Naive thymus-derived CD4-positive, alpha-beta T cell (primary cell): ENCODE measurements at regions of chr13 and their contacts with region 1.

Region 1: DNA sequence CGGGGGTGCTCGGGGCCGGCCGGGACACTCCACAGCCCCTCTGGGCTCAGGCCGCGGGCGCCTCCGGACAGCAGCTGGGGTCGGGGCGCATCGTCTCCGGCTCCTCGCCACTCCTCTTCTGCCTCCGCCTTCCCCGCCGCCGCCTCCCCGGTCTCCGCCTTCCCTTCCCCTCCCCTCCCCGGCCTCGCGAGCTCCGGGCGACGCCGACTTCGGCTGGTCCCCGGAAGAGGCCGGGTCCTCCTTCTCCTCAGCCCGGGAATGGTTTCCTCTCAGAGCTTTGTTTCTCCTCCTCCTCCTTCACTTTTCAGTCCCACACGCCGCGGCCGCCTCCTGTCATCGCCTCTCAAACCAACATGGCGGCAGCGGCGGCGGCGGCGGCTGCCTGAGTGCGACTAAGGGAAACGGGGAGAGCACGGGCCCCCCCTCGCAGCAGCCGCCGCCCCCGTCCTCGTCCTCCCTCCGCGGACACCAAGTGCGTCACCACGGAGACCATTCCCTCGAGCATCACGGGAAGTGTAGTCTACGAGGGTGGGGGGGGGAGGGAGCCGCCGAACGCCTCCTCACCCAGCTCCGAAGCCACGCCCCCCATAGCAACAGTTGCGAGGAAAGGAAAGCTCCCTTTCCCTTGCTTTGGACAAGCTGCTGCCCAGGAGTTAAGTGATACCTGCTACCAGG is at the start of gene UBL3:
- DNase-seq: peak; percentile 88 to 95 (median 92)
- ATAC-seq: peak; percentile 97
- H3K4me3 ChIP-seq: peak within 1 kb of the TSS; percentile 78
- H3K4me3 Mint-ChIP-seq: peak within 1 kb of the TSS; percentile 91 to 99 (median 96)
- H3K27ac ChIP-seq: peak within 1 kb of the TSS; percentile 98
- H3K27ac Mint-ChIP-seq: peak within 1 kb of the TSS; percentile 91 to 100 (median 99)
- H3K4me1 ChIP-seq: peaks cover 5 to 13% of the 10 kb centered on the region in 2 donors
- H3K4me1 Mint-ChIP-seq: peaks cover 10 to 42% (median 24%) of the 10 kb centered on the region in 7 donors
- H3K27me3 ChIP-seq: no peaks in the 10 kb centered on the region
- H3K27me3 Mint-ChIP-seq: no peaks in the 10 kb centered on the region
- total RNA-seq, gene UBL3: 12.7 to 34.5 (median 28.9) TPM

Region 2: DNA sequence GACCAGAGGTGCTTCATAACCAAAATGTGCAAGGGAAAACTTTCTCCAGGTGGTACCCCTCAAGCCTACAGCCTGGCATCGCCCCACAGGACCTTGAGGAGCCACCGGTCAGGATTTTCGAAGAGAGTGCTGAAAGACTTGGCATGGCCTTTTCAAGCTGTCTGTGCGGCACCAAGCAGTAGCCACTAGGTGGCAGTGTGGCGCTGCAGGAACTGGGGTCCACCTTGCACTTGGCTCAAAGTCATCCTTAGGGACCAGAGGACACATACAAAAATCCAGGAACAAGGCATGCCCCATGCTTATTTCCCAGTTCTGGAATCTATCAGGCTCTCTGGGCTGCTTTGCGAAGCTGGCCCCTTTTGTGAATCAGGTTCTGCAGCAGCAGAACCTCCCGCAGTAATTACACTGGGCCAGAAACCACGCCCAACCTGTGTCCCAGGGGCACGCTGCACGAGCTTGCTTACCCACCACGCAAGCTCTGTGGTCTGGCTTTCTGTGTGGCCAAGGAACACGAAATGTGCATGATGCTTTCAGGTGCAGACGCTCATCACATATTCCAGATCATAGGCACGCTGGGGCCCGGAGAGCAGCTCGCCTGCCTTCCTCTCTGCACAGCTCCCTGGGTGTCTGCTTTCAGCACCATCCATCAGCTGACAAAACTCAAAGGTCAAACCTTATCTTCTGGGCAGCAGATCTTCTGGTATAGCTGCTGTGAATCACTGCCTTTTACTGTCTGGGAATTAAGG is 342.1 kb before region 1 on chr13:
- CTCF ChIA-PET with region 1: no interaction called
- POLR2A ChIA-PET with region 1: no interaction called
- intact Hi-C with region 1: loop called in 1 of 2 experiments (anchors 5 kb)
- DNase-seq: peak; percentile 32 to 74 (median 61)
- ATAC-seq: peak; percentile 76
- H3K4me3 ChIP-seq: no peak overlapping the region
- H3K4me3 Mint-ChIP-seq: no peak overlapping the region
- H3K27ac ChIP-seq: no peak overlapping the region
- H3K27ac Mint-ChIP-seq: peak overlapping the region in 1 of 9 donors; percentile 21
- H3K4me1 ChIP-seq: no peaks in the 10 kb centered on the region
- H3K4me1 Mint-ChIP-seq: peaks cover 0 to 2% (median under 1%) of the 10 kb centered on the region in 7 donors
- H3K27me3 ChIP-seq: no peaks in the 10 kb centered on the region
- H3K27me3 Mint-ChIP-seq: peaks cover 3 to 6% (median 5%) of the 10 kb centered on the region in 5 donors

Region 3: DNA sequence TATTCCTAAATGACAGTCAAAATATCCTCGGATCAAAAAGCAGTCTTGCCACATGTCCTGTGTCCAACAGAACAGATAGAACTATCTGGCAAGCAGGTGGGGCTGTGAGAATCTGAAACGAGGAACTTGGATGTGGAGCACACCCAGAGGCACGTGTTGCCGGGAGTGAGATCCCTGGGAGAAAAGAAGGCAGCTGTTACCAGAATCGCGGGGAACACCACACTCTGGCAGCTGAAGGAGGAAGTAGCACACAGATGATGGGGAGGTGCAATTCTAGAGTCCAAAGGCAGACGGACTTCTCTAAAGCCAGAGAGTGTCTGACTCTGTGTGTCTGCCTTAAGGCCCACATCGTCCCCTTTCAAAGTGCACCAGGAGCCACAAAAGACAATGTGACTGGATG is 277.2 kb before region 1 on chr13:
- CTCF ChIA-PET with region 1: no interaction called
- POLR2A ChIA-PET with region 1: no interaction called
- intact Hi-C with region 1: no loop called
- DNase-seq: no peak
- ATAC-seq: peak; percentile 63
- H3K4me3 ChIP-seq: no peak overlapping the region
- H3K4me3 Mint-ChIP-seq: peak overlapping the region in 2 of 10 donors; percentile 20 to 43
- H3K27ac ChIP-seq: no peak overlapping the region
- H3K27ac Mint-ChIP-seq: peak overlapping the region in 3 of 9 donors; percentile 14 to 85 (median 59)
- H3K4me1 ChIP-seq: no peaks in the 10 kb centered on the region
- H3K4me1 Mint-ChIP-seq: peaks cover 16 to 65% (median 52%) of the 10 kb centered on the region in 7 donors
- H3K27me3 ChIP-seq: no peaks in the 10 kb centered on the region
- H3K27me3 Mint-ChIP-seq: no peaks in the 10 kb centered on the region

Region 4: DNA sequence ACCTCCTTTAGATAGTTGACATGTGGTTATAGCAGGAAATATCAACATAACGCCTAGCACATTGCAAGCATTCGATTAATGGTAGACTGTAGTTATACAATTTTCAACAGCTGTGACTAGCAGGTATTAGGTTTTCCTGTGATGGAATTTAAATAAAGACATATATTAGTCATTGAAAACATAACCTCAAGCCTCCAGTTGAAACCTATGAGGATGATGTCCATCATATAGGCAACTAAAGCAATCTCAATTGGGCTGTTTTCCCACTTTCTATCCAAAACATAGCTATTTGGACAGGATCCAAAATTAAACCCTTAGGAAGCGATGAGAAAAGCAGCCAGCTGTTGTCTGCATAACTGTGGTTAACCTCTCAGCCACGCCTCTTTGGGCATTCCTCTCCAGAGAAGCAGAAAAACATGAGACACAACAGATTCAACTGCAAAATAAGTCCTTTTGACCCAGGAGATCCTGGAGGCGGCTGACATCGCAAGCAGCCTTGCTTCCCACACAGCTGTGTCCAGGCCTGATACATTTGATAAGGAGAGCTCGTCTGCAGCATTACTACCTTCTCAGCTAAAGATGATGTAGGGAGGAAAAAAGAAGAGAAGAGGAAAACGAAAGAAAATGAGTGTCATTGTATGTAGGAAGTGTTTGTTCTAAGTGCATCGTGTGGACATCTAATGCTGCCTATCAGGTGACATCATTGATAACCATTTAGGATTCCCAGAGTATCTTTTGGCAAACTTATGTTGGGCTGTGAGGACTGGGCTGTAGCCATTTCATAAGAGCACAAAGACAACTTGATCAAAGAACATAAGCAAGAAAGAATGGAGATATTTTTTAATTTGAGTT is 52.0 kb after region 1 on chr13:
- CTCF ChIA-PET with region 1: no interaction called
- POLR2A ChIA-PET with region 1: interaction called, 5 read pairs
- intact Hi-C with region 1: loop called in 1 of 2 experiments (anchors 2 kb)
- DNase-seq: peak in 8 of 9 donors; percentile 2 to 40 (median 24)
- ATAC-seq: peak; percentile 84
- H3K4me3 ChIP-seq: peak overlapping the region; percentile 46
- H3K4me3 Mint-ChIP-seq: peak overlapping the region; percentile 69 to 95 (median 82)
- H3K27ac ChIP-seq: no peak overlapping the region
- H3K27ac Mint-ChIP-seq: peak overlapping the region; percentile 1 to 94 (median 74)
- H3K4me1 ChIP-seq: peaks cover 13 to 22% of the 10 kb centered on the region in 2 donors
- H3K4me1 Mint-ChIP-seq: peaks cover 8 to 25% (median 22%) of the 10 kb centered on the region in 7 donors
- H3K27me3 ChIP-seq: no peaks in the 10 kb centered on the region
- H3K27me3 Mint-ChIP-seq: peaks cover 0 to 29% (median 0%) of the 10 kb centered on the region in 5 donors

Region 5: GRCh38 chr13:29954082-29955028 is 104.0 kb after region 1 on chr13:
- CTCF ChIA-PET with region 1: interaction called, 3 read pairs
- POLR2A ChIA-PET with region 1: interaction called, 14 read pairs
- intact Hi-C with region 1: loop called (anchors 1 kb)
- DNase-seq: peak in 8 of 9 donors; percentile 33 to 77 (median 70)
- ATAC-seq: peak; percentile 79
- H3K4me3 ChIP-seq: peak overlapping the region; percentile 43
- H3K4me3 Mint-ChIP-seq: peak overlapping the region; percentile 72 to 90 (median 84)
- H3K27ac ChIP-seq: peak overlapping the region; percentile 69
- H3K27ac Mint-ChIP-seq: peak overlapping the region; percentile 79 to 94 (median 89)
- H3K4me1 ChIP-seq: peaks cover 20 to 30% of the 10 kb centered on the region in 2 donors
- H3K4me1 Mint-ChIP-seq: peaks cover 22 to 81% (median 53%) of the 10 kb centered on the region in 7 donors
- H3K27me3 ChIP-seq: no peaks in the 10 kb centered on the region
- H3K27me3 Mint-ChIP-seq: peaks cover 0 to 15% (median 0%) of the 10 kb centered on the region in 5 donors

Region 6: DNA sequence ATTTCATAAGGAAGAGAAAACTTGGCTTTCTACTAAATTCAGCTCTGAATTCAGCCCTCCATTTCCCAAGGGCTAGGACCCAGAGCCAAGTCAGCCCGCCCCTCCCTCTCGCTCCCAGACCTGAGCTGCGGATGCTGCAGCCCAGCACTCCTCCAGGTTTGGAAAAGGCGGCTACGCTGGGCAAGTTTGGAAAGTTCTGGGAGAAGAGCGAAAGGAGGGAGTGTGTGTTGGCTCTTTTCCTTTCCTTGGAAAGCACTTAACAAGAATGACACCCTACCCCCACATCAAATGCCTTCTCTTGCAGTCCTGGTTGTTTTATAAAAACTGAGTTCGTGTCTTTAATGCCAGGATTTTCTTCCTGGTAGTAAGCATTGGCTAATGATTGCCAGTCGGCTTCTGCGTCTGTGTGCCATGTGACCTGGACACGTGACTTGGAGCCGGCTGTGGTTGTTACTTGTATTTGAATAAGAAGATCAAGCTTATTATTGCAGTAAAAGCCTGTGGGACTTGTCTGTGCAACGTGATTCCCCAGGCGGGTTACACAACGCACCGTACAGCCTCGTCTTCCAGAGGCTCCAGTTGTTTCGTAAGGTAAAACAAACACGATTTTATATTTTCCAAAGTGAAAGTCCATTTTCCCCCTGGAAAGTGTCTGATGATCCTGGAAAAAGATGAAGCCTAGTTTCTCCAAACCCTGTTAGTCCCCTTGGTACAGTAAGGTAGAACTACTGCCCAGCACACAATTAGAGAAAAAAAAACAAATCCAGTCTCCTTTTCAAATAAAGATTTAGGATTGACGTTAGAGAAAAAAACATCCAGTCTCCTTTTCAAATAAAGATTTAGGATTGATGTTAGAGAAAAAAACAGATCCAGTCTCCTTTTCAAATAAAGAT is 545.1 kb after region 1 on chr13:
- CTCF ChIA-PET with region 1: no interaction called
- POLR2A ChIA-PET with region 1: interaction called, 3 read pairs
- intact Hi-C with region 1: loop called in 1 of 2 experiments (anchors 5 kb)
- DNase-seq: peak; percentile 22 to 83 (median 71)
- ATAC-seq: peak; percentile 82
- H3K4me3 ChIP-seq: peak overlapping the region; percentile 71
- H3K4me3 Mint-ChIP-seq: peak overlapping the region; percentile 83 to 97 (median 88)
- H3K27ac ChIP-seq: peak overlapping the region; percentile 78
- H3K27ac Mint-ChIP-seq: peak overlapping the region; percentile 90 to 97 (median 95)
- H3K4me1 ChIP-seq: peaks cover 16 to 31% of the 10 kb centered on the region in 2 donors
- H3K4me1 Mint-ChIP-seq: peaks cover 17 to 58% (median 54%) of the 10 kb centered on the region in 7 donors
- H3K27me3 ChIP-seq: no peaks in the 10 kb centered on the region
- H3K27me3 Mint-ChIP-seq: no peaks in the 10 kb centered on the region

Region 7: GRCh38 chr13:30673669-30674521 is 823.5 kb after region 1 on chr13:
- CTCF ChIA-PET with region 1: no interaction called
- POLR2A ChIA-PET with region 1: no interaction called
- intact Hi-C with region 1: loop called in 1 of 2 experiments (anchors 5 kb)
- DNase-seq: peak; percentile 79 to 94 (median 86)
- ATAC-seq: peak; percentile 97
- H3K4me3 ChIP-seq: peak overlapping the region; percentile 67
- H3K4me3 Mint-ChIP-seq: peak overlapping the region; percentile 72 to 90 (median 88)
- H3K27ac ChIP-seq: peak overlapping the region; percentile 38
- H3K27ac Mint-ChIP-seq: peak overlapping the region; percentile 81 to 98 (median 91)
- H3K4me1 ChIP-seq: peaks cover 0 to 5% of the 10 kb centered on the region in 2 donors
- H3K4me1 Mint-ChIP-seq: peaks cover 2 to 32% (median 15%) of the 10 kb centered on the region in 7 donors
- H3K27me3 ChIP-seq: no peaks in the 10 kb centered on the region
- H3K27me3 Mint-ChIP-seq: peaks cover 0 to 36% (median 0%) of the 10 kb centered on the region in 5 donors